AG04449 (cell line): ENCODE measurements at regions of chr1 and their contacts with region 1.

Region 1: GRCh38 chr1:9270290-9270883 is 22.3 kb upstream of the SPSB1 start:
- DNase-seq: no peak
- H3K4me3 ChIP-seq: no peak overlapping the region
- CTCF ChIP-seq: no peak

Region 2: GRCh38 chr1:9194016-9194415 is 76.4 kb before region 1 on chr1:
- CTCF ChIA-PET with region 1: no interaction called
- POLR2A ChIA-PET with region 1: no interaction called
- DNase-seq: no peak
- H3K4me3 ChIP-seq: no peak overlapping the region
- CTCF ChIP-seq: no peak

Region 3: DNA sequence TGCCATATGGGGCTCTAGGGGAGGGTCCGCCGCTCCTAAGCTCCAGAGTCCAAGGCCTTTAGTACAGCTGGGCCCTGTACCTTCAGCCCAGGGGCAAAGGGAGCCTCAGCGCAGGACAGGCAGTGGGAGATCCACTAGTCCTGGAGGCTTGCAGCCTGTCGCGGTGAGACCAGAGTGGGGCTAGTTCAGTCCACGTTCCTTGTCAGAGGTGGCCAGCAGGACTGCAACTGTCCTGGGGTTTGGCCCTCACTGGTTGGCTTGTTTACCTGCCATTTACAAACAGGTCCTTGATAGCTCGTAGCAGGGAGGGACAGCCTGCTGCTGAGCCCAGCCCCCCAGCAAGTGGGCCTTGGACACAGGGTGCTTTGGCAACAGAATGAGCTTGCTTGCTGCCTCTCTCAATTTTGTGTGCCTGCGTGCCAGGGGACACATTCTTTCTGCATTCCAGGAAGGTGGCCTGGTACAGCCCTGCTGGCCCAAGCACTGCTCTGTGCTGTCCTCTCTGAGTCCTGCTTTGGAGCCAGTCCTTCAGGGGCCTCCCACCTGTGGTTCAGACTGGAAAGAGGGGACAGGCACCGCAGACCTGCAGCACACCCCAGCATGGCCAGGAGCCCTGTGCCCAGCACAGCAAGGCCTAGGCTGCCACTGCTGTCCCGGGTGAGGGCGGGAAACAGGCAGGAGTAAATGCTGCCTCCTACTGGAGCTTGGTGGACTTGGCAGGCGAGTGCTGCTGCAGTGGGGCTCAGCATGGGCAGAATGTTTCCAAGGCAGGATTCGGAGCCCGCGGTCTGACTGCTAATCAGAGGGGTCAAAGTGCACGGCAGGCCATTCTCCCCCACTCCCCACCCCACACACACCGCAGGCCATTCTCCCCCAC is 20.6 kb before region 1 on chr1:
- CTCF ChIA-PET with region 1: interaction called, 90 read pairs
- POLR2A ChIA-PET with region 1: no interaction called
- DNase-seq: no peak
- H3K4me3 ChIP-seq: no peak overlapping the region
- CTCF ChIP-seq: peak; percentile 55

Region 4: GRCh38 chr1:9260059-9260766 is 10.2 kb before region 1 on chr1:
- CTCF ChIA-PET with region 1: interaction called, 90 read pairs
- POLR2A ChIA-PET with region 1: no interaction called
- DNase-seq: no peak
- H3K4me3 ChIP-seq: no peak overlapping the region
- CTCF ChIP-seq: no peak

Region 5: GRCh38 chr1:9292361-9293240 is 22.2 kb after region 1 on chr1 and contains the start of gene SPSB1:
- CTCF ChIA-PET with region 1: interaction called, 29 read pairs
- POLR2A ChIA-PET with region 1: no interaction called
- DNase-seq: no peak
- H3K4me3 ChIP-seq: peak within 1 kb of the TSS; percentile 83
- CTCF ChIP-seq: no peak

Region 6: GRCh38 chr1:9311029-9311428 is 40.6 kb after region 1 on chr1:
- CTCF ChIA-PET with region 1: no interaction called
- POLR2A ChIA-PET with region 1: no interaction called
- DNase-seq: no peak
- H3K4me3 ChIP-seq: no peak overlapping the region
- CTCF ChIP-seq: no peak

Region 7: DNA sequence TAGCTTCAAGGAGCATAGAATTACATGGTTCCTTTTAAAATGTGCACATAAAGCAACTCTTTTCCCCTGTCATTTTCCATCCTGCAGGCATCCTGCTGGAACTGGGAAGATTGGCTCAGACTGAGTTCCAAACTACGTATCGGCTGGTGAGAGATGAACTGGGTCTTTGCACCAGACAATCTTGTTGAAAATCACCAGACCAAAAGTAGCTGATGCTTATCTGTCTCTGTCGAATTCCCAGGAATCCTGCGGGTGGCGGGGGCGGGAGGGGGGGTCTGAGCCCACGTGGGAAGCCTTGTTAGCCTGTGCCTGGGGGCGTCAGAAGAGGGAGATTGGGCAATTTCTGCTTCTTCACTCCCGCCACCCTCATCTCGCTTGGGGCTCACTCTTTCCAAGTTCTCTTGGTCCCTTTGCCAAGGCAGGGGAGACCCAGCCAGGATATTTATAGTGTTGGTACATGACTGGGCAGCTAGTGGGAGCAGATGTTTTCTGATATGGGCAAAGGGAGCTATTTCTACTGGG is 178.8 kb after region 1 on chr1:
- CTCF ChIA-PET with region 1: interaction called, 184 read pairs
- POLR2A ChIA-PET with region 1: no interaction called
- DNase-seq: peak; percentile 36
- H3K4me3 ChIP-seq: no peak overlapping the region
- CTCF ChIP-seq: no peak

Region 8: DNA sequence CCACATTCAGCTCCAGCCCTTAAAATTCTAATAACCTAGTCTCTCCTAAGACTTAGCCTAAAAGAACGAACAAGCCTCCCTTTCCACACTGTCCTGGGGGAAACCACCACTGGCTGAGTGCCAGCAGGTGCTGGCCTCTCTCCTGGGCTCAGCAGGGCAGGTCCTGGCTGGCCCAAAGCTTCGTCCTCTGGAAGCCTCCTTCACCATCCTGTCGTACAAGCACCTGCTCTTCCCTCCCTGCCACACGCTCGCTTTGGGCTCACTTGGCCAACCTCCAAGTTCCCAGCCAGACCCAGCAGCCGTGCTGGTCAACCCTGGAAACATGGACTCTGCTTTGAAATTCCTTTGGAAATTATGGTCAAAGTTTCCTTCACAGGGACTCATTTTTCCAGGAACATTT is 210.7 kb after region 1 on chr1:
- CTCF ChIA-PET with region 1: interaction called, 16 read pairs
- POLR2A ChIA-PET with region 1: no interaction called
- DNase-seq: no peak
- H3K4me3 ChIP-seq: no peak overlapping the region
- CTCF ChIP-seq: no peak